BJ (cell line): ENCODE measurements at regions of chr1 and their contacts with region 1.

Region 1: DNA sequence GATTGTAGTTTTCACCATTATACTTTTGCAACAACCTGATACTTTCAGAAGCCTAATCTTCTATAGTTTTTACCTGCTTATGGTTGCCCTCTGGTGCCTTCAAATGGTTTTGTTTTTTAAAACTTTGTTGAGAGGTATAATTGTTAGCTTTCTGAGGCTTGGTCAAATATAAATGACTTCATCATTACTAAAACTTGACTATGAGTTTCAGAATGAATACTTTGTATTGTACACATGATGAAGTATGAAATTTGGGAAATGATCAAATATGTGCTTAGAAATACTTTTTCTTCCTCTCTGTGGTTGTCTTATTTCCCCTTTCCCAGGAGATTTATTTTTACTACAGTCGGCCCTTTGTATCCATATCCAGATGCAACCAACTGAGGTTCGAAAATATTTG is 151.8 kb upstream of the B3GALT2 start:
- DNase-seq: no peak
- H3K4me3 ChIP-seq: no peak overlapping the region
- H3K27me3 ChIP-seq: no peaks in the 10 kb centered on the region
- CTCF ChIP-seq: peak; percentile 22; the same call in 1 of the 2 replicates

Region 2: DNA sequence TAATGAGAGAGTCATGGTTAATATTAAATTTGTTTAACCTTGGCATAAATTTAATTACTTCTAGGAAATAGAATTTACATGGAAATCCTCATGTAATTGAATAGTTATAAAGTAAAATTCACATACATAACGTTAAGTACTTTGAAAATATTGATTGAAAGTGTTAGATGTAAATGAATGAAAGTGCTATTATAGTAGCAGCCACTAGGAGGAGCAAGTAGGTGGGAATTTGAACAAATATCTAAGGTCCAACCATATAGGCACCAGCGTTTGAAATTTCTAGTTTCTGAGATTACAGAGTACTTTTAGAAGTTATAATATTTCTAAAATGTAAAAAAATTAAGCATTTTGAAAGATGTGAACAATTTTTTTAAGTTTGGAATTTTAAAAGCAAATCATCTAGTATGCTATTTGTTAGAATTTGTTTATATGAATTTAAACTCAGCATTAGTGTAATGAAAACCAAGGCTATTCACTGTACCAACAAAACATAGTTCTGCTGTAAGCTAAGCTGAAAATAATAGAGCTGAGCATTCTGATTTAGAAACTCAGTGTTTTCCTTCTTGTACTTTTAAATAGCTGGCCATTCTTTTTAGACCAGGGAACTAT is 155.1 kb before region 1 on chr1:
- CTCF ChIA-PET with region 1: interaction called, 13 read pairs
- POLR2A ChIA-PET with region 1: no interaction called
- DNase-seq: no peak
- H3K4me3 ChIP-seq: no peak overlapping the region
- H3K27me3 ChIP-seq: no peaks in the 10 kb centered on the region
- CTCF ChIP-seq: peak; percentile 72

Region 3: DNA sequence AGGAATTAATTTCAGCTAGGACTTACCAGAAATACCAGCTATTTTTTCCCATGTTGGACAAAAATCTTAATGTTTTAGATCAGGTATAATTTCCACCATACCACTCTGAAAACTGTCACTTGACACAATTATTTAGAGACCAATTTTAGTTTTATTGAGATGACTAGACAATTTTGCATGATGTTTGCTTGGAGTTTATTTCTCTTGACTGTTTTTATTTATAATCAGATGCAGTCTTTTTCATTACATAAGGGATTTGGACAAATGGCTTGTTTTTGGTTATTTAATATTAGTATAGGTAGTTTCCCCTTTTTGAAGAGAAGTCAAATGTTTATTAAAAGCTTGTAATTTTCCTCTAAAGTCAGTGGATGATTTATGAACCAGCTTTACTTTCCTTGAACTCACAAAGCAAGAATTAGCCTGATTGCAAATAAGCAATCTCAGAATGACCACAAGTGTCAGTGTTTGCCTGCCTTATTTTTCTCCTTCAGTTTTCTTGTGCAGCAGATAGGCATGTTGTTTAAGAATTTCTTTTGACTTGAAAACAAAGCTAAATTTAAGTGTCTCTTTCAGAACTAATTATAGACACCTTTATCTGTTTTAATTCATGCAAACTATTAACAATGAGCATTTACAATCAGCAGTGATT is 148.0 kb before region 1 on chr1:
- CTCF ChIA-PET with region 1: interaction called, 13 read pairs
- POLR2A ChIA-PET with region 1: no interaction called
- DNase-seq: no peak
- H3K4me3 ChIP-seq: no peak overlapping the region
- H3K27me3 ChIP-seq: no peaks in the 10 kb centered on the region
- CTCF ChIP-seq: peak; percentile 44